ENCODE measurements at regions of chr7 and their contacts with region 1.

Region 1: DNA sequence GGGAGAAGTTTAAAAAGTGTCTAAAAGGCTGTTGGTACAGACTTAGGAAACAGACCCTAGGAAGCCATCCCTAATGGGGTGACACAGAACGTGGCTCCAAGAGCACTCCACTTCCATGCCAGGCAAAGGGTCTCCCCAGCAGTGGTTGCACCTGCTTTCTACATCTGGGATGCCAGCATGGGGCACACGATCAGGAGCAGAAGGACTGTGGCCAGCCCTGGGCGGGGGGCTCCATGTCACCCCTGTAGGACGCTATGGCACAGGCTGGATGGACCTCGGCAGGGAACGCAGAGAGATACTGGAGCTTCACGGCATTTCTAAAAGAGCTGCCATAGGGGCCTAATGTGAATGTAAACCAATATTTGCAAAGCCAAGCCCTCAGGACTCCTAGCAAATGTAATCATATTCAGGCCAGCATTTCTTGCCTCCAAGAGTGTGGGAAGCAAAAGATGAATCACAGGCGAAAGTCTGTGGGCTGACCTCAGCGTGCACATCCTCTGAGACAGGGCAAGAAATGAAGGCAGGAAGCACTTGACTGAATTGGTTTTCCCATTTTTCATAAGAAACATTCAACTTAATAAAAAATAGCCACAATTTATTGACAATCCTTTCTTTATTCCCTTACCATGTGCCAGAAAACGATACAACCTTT is 93.9 kb downstream of the ATXN7L1 start:
- DNase-seq: no peak

Region 2: GRCh38 chr7:105876091-105876963 is 93.8 kb after region 1 on chr7 and contains the start of gene ATXN7L1:
- intact Hi-C with region 1: loop called in 1 of 2 experiments (anchors 10 kb)
- DNase-seq: peak; percentile 97
- total RNA-seq, gene ATXN7L1: 9.5 to 9.7 TPM

Region 3: GRCh38 chr7:106717955-106718871 is 935.7 kb after region 1 on chr7:
- intact Hi-C with region 1: no loop called
- DNase-seq: no peak

Measured in posterior vena cava (tissue), 2 donors.